Naive thymus-derived CD4-positive, alpha-beta T cell (primary cell): ENCODE measurements at regions of chr1 and their contacts with region 1.

Region 1: DNA sequence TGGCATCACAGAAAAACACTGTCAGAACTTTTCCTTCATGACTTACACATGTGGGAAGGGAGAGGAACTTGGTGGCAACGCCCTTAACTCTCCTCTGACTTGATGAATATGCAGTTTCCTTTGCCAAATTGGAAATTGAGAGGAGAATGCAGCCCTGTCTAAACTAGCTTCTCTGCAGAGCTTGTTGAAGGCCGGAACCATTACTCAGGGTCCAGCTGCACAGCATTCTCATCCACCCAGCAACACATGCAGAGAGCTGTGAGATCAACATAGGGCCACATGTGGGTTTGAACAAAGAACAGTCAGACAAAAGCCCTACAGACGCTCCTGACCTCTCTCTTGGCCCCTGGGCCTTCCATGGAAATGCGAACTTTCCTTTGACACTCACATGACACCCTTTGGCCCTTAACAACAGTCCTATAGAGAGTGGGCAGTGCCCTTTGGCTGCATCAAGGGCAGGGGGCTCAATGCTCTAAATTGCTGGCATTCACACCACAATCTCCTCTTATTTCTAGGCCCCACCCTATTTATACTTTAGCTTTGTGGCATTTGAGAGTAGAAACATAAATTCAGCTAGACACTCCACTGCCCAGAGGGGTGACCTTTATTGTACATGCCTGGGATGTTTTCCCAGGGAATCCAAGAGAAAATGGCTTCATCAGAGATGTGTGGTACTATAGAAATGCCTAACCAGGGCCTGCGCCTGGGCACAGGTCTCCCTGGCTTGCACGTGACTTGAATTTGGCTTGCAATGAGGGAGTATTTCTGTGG is 64.4 kb downstream of the CDC7 start:
- DNase-seq: no peak
- ATAC-seq: no peak
- H3K4me3 ChIP-seq: no peak overlapping the region
- H3K4me3 Mint-ChIP-seq: no peak overlapping the region
- H3K27ac ChIP-seq: no peak overlapping the region
- H3K27ac Mint-ChIP-seq: no peak overlapping the region
- H3K4me1 ChIP-seq: peaks cover 20 to 21% of the 10 kb centered on the region in 2 donors
- H3K4me1 Mint-ChIP-seq: peaks cover 16 to 36% (median 24%) of the 10 kb centered on the region in 7 donors
- H3K27me3 ChIP-seq: no peaks in the 10 kb centered on the region
- H3K27me3 Mint-ChIP-seq: no peaks in the 10 kb centered on the region

Region 2: DNA sequence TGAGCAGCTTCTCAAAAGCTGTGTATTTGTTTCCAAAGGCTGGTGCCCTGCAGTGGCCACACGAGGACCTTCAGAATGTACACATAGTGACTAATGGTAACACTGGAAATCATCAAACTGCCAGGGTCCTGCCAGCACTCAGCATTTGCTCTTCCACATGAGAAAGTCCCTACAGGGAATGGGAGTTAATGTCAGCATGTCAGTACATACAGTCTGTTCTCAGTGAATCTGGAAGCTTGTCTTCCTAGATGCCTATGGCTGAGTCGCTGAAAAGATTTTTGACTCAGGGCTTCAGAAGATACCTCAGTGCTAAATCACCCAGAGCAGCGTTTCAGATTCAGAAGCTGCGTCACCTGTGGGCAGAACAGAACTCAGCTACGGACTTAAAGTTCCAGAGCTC is 43.8 kb after region 1 on chr1:
- CTCF ChIA-PET with region 1: no interaction called
- POLR2A ChIA-PET with region 1: no interaction called
- intact Hi-C with region 1: no loop called
- DNase-seq: no peak
- ATAC-seq: no peak
- H3K4me3 ChIP-seq: no peak overlapping the region
- H3K4me3 Mint-ChIP-seq: no peak overlapping the region
- H3K27ac ChIP-seq: no peak overlapping the region
- H3K27ac Mint-ChIP-seq: no peak overlapping the region
- H3K4me1 ChIP-seq: no peaks in the 10 kb centered on the region
- H3K4me1 Mint-ChIP-seq: peaks cover 0 to 9% (median 0%) of the 10 kb centered on the region in 7 donors
- H3K27me3 ChIP-seq: no peaks in the 10 kb centered on the region
- H3K27me3 Mint-ChIP-seq: no peaks in the 10 kb centered on the region

Region 3: GRCh38 chr1:91633438-91633837 is 68.4 kb after region 1 on chr1:
- CTCF ChIA-PET with region 1: no interaction called
- POLR2A ChIA-PET with region 1: no interaction called
- intact Hi-C with region 1: loop called in 1 of 2 experiments (anchors 5 kb)
- DNase-seq: no peak
- ATAC-seq: no peak
- H3K4me3 ChIP-seq: no peak overlapping the region
- H3K4me3 Mint-ChIP-seq: no peak overlapping the region
- H3K27ac ChIP-seq: no peak overlapping the region
- H3K27ac Mint-ChIP-seq: peak overlapping the region in 1 of 9 donors; percentile 3
- H3K4me1 ChIP-seq: no peaks in the 10 kb centered on the region
- H3K4me1 Mint-ChIP-seq: peaks cover 0 to 8% (median 4%) of the 10 kb centered on the region in 7 donors
- H3K27me3 ChIP-seq: no peaks in the 10 kb centered on the region
- H3K27me3 Mint-ChIP-seq: peaks cover 0 to 6% (median 0%) of the 10 kb centered on the region in 5 donors